Cardiac septum (tissue), 1 donor: ENCODE measurements at regions of chr1 and their contacts with region 1.

Region 1: DNA sequence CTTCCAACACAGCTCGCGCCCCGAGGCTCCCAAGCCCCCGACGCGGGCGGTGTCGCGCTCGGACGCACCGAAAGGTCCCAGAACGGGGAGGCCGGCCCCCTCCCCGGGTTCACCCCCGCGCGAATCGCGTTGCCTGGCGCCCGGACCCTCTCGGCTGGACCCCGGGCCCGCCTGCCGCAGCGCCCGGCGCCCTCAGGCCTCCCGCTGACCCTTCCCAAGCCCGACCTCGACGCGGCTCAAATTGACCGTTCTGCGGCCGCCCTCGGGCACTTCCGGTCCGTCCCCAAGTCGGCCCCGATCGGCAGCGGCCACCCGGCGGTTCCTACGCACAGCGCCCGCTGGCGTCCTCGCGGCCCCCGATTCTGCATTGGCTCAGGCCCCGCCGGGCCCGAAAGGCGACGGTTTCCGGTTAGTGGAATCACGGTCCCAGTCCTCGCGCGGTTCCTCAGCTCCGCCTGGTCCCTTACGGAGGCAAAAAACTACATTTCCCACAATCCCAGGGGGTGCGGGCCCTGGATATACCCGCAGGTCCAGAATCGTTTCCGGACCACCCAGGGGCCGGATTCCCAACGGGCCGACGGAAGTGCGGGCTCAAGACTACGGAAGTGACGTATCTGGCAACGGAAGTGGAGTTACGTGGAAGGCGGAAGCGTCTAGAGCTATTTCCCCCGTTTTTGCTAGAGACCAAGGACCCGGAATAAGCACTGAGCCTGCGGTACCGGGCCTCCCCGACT is at the start of gene AURKAIP1:
- DNase-seq: peak; percentile 98
- total RNA-seq, gene AURKAIP1: 174 TPM

Region 2: GRCh38 chr1:1122078-1122811 is 252.9 kb before region 1 on chr1:
- intact Hi-C with region 1: loop called (anchors 5 kb)
- DNase-seq: peak; percentile 92

Region 3: GRCh38 chr1:1349256-1350012 is 25.7 kb before region 1 on chr1 and contains the start of gene DVL1:
- intact Hi-C with region 1: loop called (anchors 2 kb)
- DNase-seq: no peak
- total RNA-seq, gene DVL1: 96.2 TPM

Region 4: GRCh38 chr1:1406817-1407635 is 31.9 kb after region 1 on chr1 and contains the start of gene MRPL20:
- intact Hi-C with region 1: loop called (anchors 2 kb)
- DNase-seq: peak; percentile 98
- total RNA-seq, gene MRPL20: 127 TPM